Endothelial cell of umbilical vein (primary cell): ENCODE measurements at regions of chr16 and their contacts with region 1.

Region 1: DNA sequence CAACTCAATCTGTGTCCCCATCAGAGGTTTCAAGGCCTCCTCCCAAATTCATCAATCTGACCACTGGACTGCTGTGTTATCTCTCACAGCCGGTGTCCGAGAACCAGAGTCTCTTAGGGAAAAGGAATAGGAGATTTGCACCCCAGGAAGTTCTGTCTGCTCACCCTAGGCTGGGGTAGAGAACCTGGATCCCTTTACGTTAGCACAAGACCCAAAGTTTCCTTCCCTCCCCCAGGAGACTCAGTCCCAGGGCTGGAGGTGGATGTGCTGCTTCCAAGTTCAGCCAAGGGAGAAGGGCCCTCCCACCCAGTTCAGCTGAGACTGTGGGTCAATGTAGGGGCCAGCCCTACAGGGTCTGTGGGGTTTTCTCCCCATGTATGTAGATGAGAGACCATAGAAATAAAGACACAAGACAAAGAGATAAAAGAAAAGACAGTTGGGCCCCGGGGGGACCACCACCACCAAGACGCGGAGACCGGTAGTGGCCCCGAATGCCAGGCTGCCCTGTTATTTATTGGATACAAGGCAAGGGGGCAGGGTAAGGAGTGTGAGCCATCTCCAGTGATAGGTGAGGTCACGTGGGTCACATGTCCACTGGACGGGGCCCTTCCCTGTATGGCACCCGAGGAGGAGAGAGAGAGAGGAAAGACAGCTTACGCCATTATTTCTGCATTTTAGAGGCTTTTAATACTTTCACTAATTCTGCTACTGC is 22.7 kb upstream of the OR1F1 start:
- DNase-seq: no peak
- H3K4me3 ChIP-seq: no peak overlapping the region
- H3K27ac ChIP-seq: no peak overlapping the region
- H3K4me1 ChIP-seq: peaks cover under 1% of the 10 kb centered on the region
- H3K27me3 ChIP-seq: peaks cover 15 to 16% of the 10 kb centered on the region in 2 experiments
- CTCF ChIP-seq: no peak
- POLR2A ChIP-seq: no peak

Region 2: DNA sequence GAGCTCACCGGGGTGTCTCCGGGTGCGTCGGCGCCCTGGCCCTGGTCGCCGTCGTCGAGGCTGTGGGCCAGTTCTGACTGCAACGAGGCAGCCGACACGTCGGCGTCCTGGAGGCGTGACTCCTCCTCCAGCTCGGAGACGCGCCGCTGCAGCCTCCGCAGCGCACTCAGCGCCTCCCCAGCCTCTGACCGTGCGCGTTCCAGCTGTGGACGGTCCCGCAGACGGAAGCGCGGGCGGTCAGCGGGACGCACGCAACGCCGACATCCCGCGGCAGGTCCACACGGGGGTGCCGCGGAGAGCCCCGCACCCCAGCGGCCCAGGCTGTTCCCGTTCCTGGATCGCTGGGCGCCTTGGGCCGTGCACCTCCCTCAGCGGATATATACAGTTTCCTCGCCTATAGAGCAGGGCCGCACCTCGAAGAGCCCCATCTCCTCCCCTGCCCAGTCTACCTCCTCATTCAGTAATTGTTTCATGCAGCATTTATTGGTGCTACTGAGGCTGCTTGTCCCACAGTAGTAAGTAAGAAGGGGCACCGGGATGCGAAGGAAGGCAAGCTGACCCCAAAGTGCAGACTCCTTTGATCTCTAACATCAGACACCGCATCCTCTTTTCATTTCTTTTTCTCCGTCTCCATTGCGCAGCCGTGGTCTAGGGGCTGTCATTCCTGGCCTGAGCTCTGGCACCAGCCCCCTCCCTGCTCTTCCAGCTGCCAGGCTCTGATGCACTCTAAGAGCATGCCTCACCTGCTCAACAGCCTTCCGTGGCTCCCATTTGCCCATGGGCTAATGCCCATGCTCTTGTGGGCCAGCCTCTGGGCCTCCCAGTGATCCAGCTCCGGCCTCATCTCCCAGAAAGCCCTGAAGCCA is 135.5 kb before region 1 on chr16:
- CTCF ChIA-PET with region 1: interaction called, 17 read pairs
- POLR2A ChIA-PET with region 1: no interaction called
- dilution Hi-C with region 1: no loop called
- intact Hi-C with region 1: no loop called
- DNase-seq: no peak
- H3K4me3 ChIP-seq: no peak overlapping the region
- H3K27ac ChIP-seq: no peak overlapping the region
- H3K4me1 ChIP-seq: no peaks in the 10 kb centered on the region
- H3K27me3 ChIP-seq: peaks cover 36 to 41% of the 10 kb centered on the region in 2 experiments
- CTCF ChIP-seq: no peak
- POLR2A ChIP-seq: no peak

Region 3: GRCh38 chr16:3094289-3095027 is 70.8 kb before region 1 on chr16:
- CTCF ChIA-PET with region 1: interaction called, 4 read pairs
- POLR2A ChIA-PET with region 1: no interaction called
- dilution Hi-C with region 1: no loop called
- intact Hi-C with region 1: loop called (anchors 1 kb)
- DNase-seq: peak; percentile 74
- H3K4me3 ChIP-seq: no peak overlapping the region
- H3K27ac ChIP-seq: no peak overlapping the region
- H3K4me1 ChIP-seq: peaks cover under 1% of the 10 kb centered on the region
- H3K27me3 ChIP-seq: peaks cover 0 to 2% of the 10 kb centered on the region in 2 experiments
- CTCF ChIP-seq: peak; percentile 61 to 70
- POLR2A ChIP-seq: no peak

Region 4: GRCh38 chr16:3150346-3151218 is 14.7 kb before region 1 on chr16:
- CTCF ChIA-PET with region 1: interaction called, 13 read pairs
- POLR2A ChIA-PET with region 1: interaction called, 6 read pairs
- dilution Hi-C with region 1: no loop called
- intact Hi-C with region 1: loop called (anchors 2 kb)
- DNase-seq: peak; percentile 98
- H3K4me3 ChIP-seq: peak overlapping the region; percentile 68 to 80 (median 69)
- H3K27ac ChIP-seq: peak overlapping the region; percentile 37
- H3K4me1 ChIP-seq: peaks cover 10% of the 10 kb centered on the region
- H3K27me3 ChIP-seq: no peaks in the 10 kb centered on the region
- CTCF ChIP-seq: no peak
- POLR2A ChIP-seq: peak; percentile 33

Region 5: GRCh38 chr16:3364774-3365427 is 199.6 kb after region 1 on chr16:
- CTCF ChIA-PET with region 1: no interaction called
- POLR2A ChIA-PET with region 1: no interaction called
- dilution Hi-C with region 1: no loop called
- intact Hi-C with region 1: no loop called
- DNase-seq: peak; percentile 95
- H3K4me3 ChIP-seq: peak overlapping the region; percentile 25 to 68 (median 57)
- H3K27ac ChIP-seq: peak overlapping the region; percentile 71
- H3K4me1 ChIP-seq: peaks cover 2% of the 10 kb centered on the region
- H3K27me3 ChIP-seq: no peaks in the 10 kb centered on the region
- CTCF ChIP-seq: no peak
- POLR2A ChIP-seq: peak; percentile 47